ENCODE measurements at regions of chr12 and their contacts with region 1.

Region 1: DNA sequence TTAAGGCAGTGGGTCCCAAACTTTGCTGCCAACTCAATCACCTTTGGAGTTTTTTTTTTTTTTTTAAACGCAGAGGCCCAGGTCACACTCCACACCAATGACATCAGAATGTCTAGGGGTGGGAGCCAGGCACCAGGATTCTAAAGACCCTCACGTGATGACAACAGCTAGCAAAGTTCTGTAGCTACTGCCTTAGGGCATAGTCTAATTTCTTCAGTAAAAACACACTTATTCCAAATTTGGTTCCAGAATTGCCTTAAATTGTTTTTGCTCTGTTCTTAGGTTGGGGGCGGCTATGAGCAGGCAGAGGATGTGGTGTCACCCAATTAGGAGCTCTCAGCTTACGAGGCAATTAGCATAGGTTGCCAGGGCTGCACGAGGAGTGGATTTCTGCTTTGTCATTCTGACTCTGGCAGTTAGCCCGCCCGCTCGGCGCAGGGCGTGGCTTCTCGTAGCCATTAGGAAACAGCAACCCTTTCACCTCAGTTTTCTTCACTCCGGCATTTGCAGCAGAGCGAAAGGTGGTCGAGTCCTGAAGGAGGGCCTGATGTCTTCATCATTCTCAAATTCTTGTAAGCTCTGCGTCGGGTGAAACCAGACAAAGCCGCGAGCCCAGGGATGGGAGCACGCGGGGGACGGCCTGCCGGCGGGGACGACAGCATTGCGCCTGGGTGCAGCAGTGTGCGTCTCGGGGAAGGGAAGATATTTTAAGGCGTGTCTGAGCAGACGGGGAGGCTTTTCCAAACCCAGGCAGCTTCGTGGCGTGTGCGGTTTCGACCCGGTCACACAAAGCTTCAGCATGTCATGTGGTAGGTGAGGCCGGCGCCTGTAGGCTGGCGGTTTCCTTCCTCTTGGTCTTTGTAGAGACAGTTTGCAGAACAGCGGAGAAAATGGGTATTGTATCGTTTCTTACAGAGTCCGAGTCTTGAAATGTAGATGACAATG is 16.7 kb upstream of the EID3 start:
- DNase-seq: peak; percentile 75 to 95 (median 88)
- ATAC-seq: peak; percentile 87
- H3K4me3 ChIP-seq: peak overlapping the region; percentile 80 to 86
- H3K4me3 Mint-ChIP-seq: peak overlapping the region; percentile 97
- H3K27ac ChIP-seq: peak overlapping the region; percentile 64 to 90
- H3K27ac Mint-ChIP-seq: peak overlapping the region; percentile 96
- H3K4me1 ChIP-seq: peaks cover 24% of the 10 kb centered on the region
- H3K4me1 Mint-ChIP-seq: peaks cover 35% of the 10 kb centered on the region
- H3K27me3 ChIP-seq: no peaks in the 10 kb centered on the region
- H3K27me3 Mint-ChIP-seq: no peaks in the 10 kb centered on the region
- CTCF ChIP-seq: no peak

Region 2: GRCh38 chr12:104137913-104138796 is 148.7 kb before region 1 on chr12 and contains the start of gene NFYB:
- CTCF ChIA-PET with region 1: no interaction called
- POLR2A ChIA-PET with region 1: interaction called, 4 read pairs
- intact Hi-C with region 1: loop called (anchors 2 to 5 kb)
- DNase-seq: peak; percentile 82 to 98 (median 90)
- ATAC-seq: peak; percentile 95
- H3K4me3 ChIP-seq: peak within 1 kb of the TSS; percentile 63 to 71
- H3K4me3 Mint-ChIP-seq: peak within 1 kb of the TSS; percentile 92
- H3K27ac ChIP-seq: peak within 1 kb of the TSS; percentile 57 to 58
- H3K27ac Mint-ChIP-seq: peak within 1 kb of the TSS; percentile 87
- H3K4me1 ChIP-seq: peaks cover 31% of the 10 kb centered on the region
- H3K4me1 Mint-ChIP-seq: peaks cover 16% of the 10 kb centered on the region
- H3K27me3 ChIP-seq: no peaks in the 10 kb centered on the region
- H3K27me3 Mint-ChIP-seq: no peaks in the 10 kb centered on the region
- CTCF ChIP-seq: no peak
- total RNA-seq, gene NFYB: 9.1 to 11.2 TPM

Region 3: DNA sequence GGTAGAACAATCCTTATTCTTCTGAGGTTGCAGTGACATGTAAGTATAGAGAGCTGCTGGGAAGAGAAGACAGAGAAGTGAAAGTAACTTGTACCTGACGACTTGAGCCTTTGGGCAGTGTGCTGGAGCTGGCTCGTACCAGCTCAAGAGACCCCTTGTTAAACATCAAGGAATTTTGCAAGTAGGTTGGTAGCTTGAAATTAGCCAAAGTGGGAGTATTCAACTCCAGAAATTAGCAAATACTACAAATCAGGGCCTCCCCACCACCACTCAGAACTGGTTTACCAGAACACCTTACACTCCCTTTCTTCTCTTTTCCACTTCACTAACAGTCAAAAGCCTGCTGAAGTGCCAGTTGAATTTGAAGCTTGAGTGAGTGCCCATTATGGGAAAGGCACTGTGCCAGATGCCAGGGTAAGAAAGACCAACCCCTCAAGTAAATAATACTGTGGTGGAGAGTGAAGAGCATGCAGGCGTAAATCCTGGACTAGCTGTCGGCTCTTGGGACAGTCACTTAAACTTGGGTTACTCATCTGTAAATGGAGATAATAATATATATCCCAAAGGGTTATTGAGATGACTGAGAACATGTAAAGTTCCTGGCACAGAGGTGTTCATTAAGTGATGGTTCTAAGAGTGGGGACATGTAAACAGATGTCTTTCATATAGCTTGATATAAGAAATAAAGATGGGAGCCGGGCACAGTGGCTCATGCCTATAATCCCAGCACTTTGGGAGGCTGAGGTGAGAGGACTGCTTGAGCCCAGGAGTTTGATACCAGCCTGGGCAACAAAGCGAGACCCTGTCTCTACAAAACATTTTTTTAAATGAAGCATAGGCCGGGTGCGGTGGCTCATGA is 10.3 kb before region 1 on chr12:
- CTCF ChIA-PET with region 1: interaction called, 4 read pairs
- POLR2A ChIA-PET with region 1: interaction called, 16 read pairs
- intact Hi-C with region 1: no loop called
- DNase-seq: no peak
- ATAC-seq: no peak
- H3K4me3 ChIP-seq: no peak overlapping the region
- H3K4me3 Mint-ChIP-seq: peak overlapping the region; percentile 64
- H3K27ac ChIP-seq: no peak overlapping the region
- H3K27ac Mint-ChIP-seq: no peak overlapping the region
- H3K4me1 ChIP-seq: no peaks in the 10 kb centered on the region
- H3K4me1 Mint-ChIP-seq: peaks cover 6% of the 10 kb centered on the region
- H3K27me3 ChIP-seq: no peaks in the 10 kb centered on the region
- H3K27me3 Mint-ChIP-seq: peaks cover 6% of the 10 kb centered on the region
- CTCF ChIP-seq: no peak

Region 4: DNA sequence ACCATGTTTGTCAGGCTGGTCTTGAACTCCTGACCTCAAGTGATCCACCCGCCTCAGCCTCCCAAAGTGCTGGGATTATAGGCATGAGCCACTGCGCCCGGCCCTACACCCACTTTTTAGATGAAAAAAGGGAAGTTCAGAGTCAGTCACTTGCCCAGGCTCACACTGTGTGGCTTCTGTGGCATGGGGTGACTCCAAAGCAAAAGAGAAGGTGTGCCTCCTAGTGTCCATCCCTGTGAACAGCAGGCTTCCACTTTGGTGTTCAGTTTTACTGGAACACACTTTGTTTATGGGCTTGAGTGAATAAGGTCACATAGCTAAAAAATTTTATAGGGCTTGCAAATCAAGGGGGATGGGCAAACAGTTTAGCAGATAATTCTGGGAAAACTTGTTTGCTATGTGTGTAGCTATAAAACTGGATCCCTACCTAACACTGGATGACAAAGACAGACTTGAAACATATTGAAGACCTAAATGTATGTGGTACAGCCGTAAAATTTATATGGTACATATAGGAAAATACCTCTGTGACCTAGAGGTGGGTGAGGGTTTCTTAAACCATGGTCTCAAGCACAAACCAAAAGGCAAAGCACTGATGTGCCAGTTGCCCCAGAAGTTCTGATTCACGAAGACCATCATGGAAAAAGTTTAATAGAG is 71.7 kb after region 1 on chr12:
- CTCF ChIA-PET with region 1: interaction called, 5 read pairs
- POLR2A ChIA-PET with region 1: no interaction called
- intact Hi-C with region 1: loop called in 1 of 2 experiments (anchors 1 kb)
- DNase-seq: peak; percentile 38 to 80 (median 69)
- ATAC-seq: peak; percentile 98
- H3K4me3 ChIP-seq: no peak overlapping the region
- H3K4me3 Mint-ChIP-seq: no peak overlapping the region
- H3K27ac ChIP-seq: no peak overlapping the region
- H3K27ac Mint-ChIP-seq: no peak overlapping the region
- H3K4me1 ChIP-seq: no peaks in the 10 kb centered on the region
- H3K4me1 Mint-ChIP-seq: no peaks in the 10 kb centered on the region
- H3K27me3 ChIP-seq: no peaks in the 10 kb centered on the region
- H3K27me3 Mint-ChIP-seq: no peaks in the 10 kb centered on the region
- CTCF ChIP-seq: peak; percentile 83

Region 5: DNA sequence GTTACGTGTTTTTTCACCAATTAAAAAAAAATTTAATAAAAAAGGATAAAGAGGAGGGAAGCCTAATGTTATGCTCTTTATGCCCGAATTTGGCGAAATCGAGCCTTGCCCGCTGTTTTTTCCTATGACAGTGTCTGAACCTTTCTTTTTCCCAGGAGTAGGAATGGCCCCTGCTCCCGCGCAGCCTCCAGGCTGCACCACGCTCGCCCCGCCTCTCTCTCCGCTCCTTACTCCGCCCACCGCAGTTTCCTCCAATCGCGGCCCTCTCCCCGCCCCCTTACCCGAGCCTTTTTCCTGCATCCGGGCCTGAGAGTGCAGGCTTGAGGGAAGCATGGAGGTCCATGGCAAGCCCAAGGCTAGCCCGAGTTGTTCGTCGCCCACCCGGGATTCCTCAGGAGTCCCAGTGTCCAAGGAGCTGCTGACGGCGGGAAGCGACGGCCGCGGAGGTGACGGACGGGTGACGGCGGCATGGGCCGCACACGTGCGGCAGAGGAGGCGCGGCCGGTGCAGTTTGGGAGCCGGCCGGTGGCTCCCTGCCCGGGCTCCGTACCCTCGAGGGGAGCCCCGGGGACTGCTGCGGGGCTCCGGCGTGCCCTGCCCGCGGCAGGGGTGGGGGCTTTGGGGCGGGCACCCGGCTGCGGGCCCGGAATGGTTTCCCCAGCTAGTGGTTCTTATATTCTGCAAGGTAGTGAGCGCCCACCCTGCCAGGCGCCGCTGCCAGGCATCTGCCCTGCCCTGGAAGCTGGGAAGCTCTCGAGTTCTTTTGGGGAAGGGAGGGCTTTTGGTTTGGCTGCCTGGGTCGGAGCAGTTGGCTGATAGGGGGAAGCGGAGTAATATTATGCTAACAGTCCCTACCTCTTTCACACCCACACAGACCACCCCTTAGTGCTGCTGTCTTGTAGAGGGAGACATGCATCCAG is 699.5 kb after region 1 on chr12 and contains the start of gene NOPCHAP1:
- CTCF ChIA-PET with region 1: no interaction called
- POLR2A ChIA-PET with region 1: interaction called, 3 read pairs
- intact Hi-C with region 1: loop called (anchors 1 to 5 kb)
- DNase-seq: peak; percentile 66 to 89 (median 82)
- ATAC-seq: peak; percentile 98
- H3K4me3 ChIP-seq: peak within 1 kb of the TSS; percentile 70 to 93
- H3K4me3 Mint-ChIP-seq: peak within 1 kb of the TSS; percentile 90
- H3K27ac ChIP-seq: peak within 1 kb of the TSS; percentile 33 to 55
- H3K27ac Mint-ChIP-seq: peak within 1 kb of the TSS; percentile 80
- H3K4me1 ChIP-seq: peaks cover 16% of the 10 kb centered on the region
- H3K4me1 Mint-ChIP-seq: peaks cover 35% of the 10 kb centered on the region
- H3K27me3 ChIP-seq: no peaks in the 10 kb centered on the region
- H3K27me3 Mint-ChIP-seq: no peaks in the 10 kb centered on the region
- CTCF ChIP-seq: no peak
- total RNA-seq, gene NOPCHAP1: 13.2 to 16.5 TPM

Measured in CD8-positive, alpha-beta T cell (primary cell).